Activated CD8-positive, alpha-beta T cell treated with anti-CD3 and anti-CD28 coated beads, Interleukin-2, amount 10 ng/mL, durations not matched to agents 7 days and 5 days (primary cell): ENCODE measurements at regions of chr17 and their contacts with region 1.

Region 1: GRCh38 chr17:35046740-35047283 is 16.7 kb downstream of the RFFL start:
- DNase-seq: peak; percentile 78
- ATAC-seq: peak; percentile 95
- H3K4me3 Mint-ChIP-seq: peak overlapping the region; percentile 69
- H3K27ac Mint-ChIP-seq: peak overlapping the region; percentile 83
- H3K4me1 Mint-ChIP-seq: peaks cover 49% of the 10 kb centered on the region
- H3K27me3 Mint-ChIP-seq: no peaks in the 10 kb centered on the region

Region 2: DNA sequence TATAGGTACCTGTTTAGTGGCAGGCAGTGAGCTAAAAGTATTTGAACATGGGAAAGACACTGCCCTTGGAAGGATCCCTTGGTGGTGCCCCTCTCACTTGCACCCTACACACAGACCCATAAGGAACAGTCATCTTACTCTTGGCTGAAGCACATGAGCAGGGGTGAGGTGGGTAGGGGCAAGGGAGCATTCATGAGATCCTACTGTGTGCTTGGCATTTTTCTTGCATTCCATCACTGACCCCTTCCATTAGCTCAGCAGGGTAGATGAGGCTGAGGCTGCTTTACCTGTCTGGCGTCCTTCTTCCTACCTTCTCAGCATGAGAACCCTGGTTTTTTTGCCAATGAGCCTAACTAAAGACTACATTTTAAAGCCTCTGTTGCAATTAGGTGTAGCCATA is 133.8 kb before region 1 on chr17:
- CTCF ChIA-PET with region 1: no interaction called
- POLR2A ChIA-PET with region 1: no interaction called
- DNase-seq: no peak
- ATAC-seq: no peak
- H3K4me3 Mint-ChIP-seq: no peak overlapping the region
- H3K27ac Mint-ChIP-seq: no peak overlapping the region
- H3K4me1 Mint-ChIP-seq: no peaks in the 10 kb centered on the region
- H3K27me3 Mint-ChIP-seq: no peaks in the 10 kb centered on the region

Region 3: DNA sequence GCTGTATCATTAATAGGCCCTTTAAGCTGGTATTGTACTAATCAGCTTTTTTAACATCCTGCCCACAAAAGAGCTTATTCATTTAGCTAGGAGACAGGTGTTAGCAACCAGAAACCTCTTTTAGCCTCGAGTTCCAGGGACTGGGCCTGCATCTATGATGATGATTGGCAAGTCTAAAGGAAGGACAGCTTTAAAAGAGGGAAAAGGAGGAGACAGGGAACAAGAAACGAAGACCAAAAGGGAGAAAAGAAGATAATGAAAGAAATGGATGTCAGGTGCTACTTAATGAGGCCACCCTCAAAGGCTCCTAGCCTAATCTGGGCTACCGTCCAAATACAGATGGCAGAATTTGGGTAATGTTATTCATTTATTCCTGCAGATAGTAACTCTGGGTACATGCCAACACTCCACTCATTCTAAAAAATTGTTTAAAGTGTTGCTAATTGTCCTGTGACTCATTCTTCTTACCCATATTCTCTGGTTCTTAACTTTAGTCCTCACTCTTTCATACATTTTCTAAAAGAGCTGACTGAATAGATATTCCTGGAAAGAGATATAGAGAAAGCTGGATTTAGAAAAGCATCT is 35.4 kb after region 1 on chr17:
- CTCF ChIA-PET with region 1: interaction called, 11 read pairs
- POLR2A ChIA-PET with region 1: interaction called, 7 read pairs
- DNase-seq: no peak
- ATAC-seq: no peak
- H3K4me3 Mint-ChIP-seq: peak overlapping the region; percentile 53
- H3K27ac Mint-ChIP-seq: peak overlapping the region; percentile 84
- H3K4me1 Mint-ChIP-seq: peaks cover 63% of the 10 kb centered on the region
- H3K27me3 Mint-ChIP-seq: no peaks in the 10 kb centered on the region

Region 4: GRCh38 chr17:35103271-35103670 is 56.5 kb after region 1 on chr17:
- CTCF ChIA-PET with region 1: no interaction called
- POLR2A ChIA-PET with region 1: no interaction called
- DNase-seq: no peak
- ATAC-seq: no peak
- H3K4me3 Mint-ChIP-seq: no peak overlapping the region
- H3K27ac Mint-ChIP-seq: no peak overlapping the region
- H3K4me1 Mint-ChIP-seq: no peaks in the 10 kb centered on the region
- H3K27me3 Mint-ChIP-seq: no peaks in the 10 kb centered on the region